ENCODE measurements at regions of chr16 and their contacts with region 1.

Region 1: DNA sequence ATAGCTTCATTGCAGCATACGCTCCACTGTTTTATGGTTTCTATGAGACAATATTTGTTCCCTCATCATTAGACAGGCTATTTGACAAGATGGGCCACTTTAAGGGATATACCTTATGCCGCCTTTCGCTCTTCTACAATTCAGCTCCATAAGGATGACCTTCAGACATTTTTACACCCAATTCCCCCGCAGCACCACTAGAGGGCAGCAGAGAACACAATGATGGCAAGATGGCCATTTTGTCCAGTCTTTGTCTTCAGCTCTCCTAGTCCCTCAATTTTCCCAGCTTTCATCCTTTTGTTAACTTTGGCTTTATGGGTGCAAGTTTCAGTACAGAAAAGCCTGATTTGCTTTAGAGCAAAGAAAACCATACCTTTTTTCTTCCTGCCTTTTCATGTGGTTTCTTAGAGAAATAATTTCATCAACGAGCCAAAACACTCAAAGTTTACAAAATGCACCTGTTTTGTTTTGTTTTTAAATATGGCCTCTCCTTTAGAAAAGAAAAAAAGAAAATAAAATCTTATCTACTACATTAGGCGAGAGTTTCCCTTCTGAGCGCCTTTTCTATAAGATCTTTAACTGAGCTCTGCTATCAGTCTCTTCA is 355.3 kb downstream of the TOX3 start:
- DNase-seq: peak; percentile 74
- H3K4me3 ChIP-seq: no peak overlapping the region
- H3K27ac ChIP-seq: no peak overlapping the region
- H3K4me1 ChIP-seq: no peaks in the 10 kb centered on the region
- H3K27me3 ChIP-seq: no peaks in the 10 kb centered on the region
- CTCF ChIP-seq: peak; percentile 59 to 87 (median 82)
- POLR2A ChIP-seq: no peak

Region 2: GRCh38 chr16:52078716-52079655 is 112.6 kb before region 1 on chr16:
- intact Hi-C with region 1: no loop called
- DNase-seq: no peak
- H3K4me3 ChIP-seq: no peak overlapping the region
- H3K27ac ChIP-seq: no peak overlapping the region
- H3K4me1 ChIP-seq: no peaks in the 10 kb centered on the region
- H3K27me3 ChIP-seq: no peaks in the 10 kb centered on the region
- CTCF ChIP-seq: no peak
- POLR2A ChIP-seq: no peak

Region 3: DNA sequence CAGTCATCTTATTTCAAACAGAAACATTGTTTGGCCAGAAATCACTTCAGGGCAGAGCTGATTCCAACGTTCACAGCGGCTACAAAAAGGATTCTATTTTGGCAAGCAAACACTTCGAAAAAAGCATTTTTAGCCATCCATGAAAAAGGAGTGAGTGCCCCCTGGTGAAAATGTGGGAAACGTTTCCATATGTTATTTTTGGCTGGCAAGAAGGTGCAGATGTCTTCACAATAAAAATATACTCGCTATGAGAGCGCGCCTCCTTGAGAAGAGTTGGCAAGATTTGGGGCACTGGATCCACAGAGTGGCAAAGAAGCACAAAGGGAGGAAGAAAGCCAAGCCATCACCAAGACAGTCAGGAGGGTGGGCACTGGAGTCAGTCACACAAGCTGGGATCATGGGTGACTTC is 670.0 kb after region 1 on chr16:
- intact Hi-C with region 1: loop called (anchors 5 kb)
- DNase-seq: no peak
- H3K4me3 ChIP-seq: no peak overlapping the region
- H3K27ac ChIP-seq: no peak overlapping the region
- H3K4me1 ChIP-seq: no peaks in the 10 kb centered on the region
- H3K27me3 ChIP-seq: no peaks in the 10 kb centered on the region
- CTCF ChIP-seq: peak in 3 of 11 experiments; percentile 9 to 17 (median 17)
- POLR2A ChIP-seq: no peak

Region 4: DNA sequence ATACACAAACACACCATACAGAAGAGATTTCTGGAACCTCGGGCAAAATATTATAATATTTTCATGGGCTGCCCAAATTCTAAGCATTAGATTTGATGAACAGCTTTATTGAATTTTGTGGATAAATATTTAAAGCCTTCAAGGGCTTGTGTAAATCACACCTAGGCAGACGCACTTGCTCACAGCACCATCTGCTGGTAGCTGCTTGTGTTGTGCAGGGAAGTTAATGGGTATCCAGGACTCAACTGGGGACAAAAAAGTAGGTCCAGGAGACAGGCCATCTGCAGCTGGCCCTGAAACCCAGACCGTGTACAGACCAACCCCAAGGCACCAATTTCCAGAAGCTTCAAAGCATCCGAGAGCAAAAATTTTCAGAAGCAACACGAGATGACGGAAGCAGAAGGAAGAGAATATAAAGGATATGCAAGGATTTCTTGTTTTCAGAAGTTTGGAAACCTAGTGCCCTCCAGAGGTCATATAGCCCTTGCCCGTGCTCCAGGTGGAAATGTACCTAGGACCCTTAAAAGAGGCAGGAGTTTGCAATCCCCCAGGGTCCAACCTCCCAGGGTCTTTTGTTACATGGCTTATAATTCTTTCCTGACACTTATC is 721.0 kb after region 1 on chr16:
- intact Hi-C with region 1: loop called (anchors 10 kb)
- DNase-seq: no peak
- H3K4me3 ChIP-seq: no peak overlapping the region
- H3K27ac ChIP-seq: no peak overlapping the region
- H3K4me1 ChIP-seq: no peaks in the 10 kb centered on the region
- H3K27me3 ChIP-seq: peaks cover 0 to 10% (median 0%) of the 10 kb centered on the region in 7 donors
- CTCF ChIP-seq: peak in 8 of 11 experiments; percentile 24 to 65 (median 54)
- POLR2A ChIP-seq: no peak